Activated naive CD4-positive, alpha-beta T cell treated with anti-CD3 and anti-CD28 coated beads for 36 hours (primary cell): ENCODE measurements at regions of chr9 and their contacts with region 1.

Region 1: DNA sequence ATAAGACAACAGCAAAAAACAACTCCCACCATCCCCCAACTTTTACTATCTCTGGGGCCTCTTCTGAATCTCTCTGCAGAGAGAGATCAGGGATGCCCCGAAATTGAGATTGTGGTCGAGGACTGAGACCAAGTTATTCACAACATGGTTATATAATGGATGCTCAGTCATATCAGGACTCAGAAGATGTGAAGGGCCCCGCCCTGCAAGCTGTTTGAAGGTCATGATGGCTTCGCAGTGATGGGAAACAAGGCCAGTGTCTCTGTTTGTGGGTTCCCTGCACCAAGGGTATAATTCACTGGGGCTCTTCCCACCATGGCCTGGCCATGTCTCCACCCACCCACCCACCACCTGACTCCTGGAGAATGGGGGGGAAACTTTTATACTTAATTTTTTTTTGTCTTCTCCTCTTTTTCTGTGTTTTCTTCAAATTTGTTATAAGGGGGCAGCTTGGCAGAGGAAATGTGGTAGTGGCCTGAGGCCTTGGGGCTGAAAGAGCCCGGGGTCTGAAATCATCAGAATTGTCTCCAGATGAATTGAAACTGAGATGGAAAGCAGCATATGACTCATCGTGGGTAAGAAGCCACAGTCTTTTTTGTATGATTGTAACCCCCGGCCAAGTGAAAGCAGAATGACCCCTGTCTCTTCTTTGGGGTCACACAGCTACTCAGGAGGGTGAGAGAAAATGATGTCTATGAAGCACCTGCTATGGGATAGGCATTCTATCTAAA is 15.0 kb upstream of the TEX48 start:
- DNase-seq: peak; percentile 89
- H3K4me3 Mint-ChIP-seq: peak overlapping the region; percentile 54
- H3K27ac Mint-ChIP-seq: peak overlapping the region; percentile 98
- H3K4me1 Mint-ChIP-seq: peaks cover 74% of the 10 kb centered on the region
- H3K27me3 Mint-ChIP-seq: no peaks in the 10 kb centered on the region

Region 2: GRCh38 chr9:114304416-114305188 is 392.4 kb before region 1 on chr9:
- CTCF ChIA-PET with region 1: no interaction called
- intact Hi-C with region 1: no loop called
- DNase-seq: no peak
- H3K4me3 Mint-ChIP-seq: no peak overlapping the region
- H3K27ac Mint-ChIP-seq: no peak overlapping the region
- H3K4me1 Mint-ChIP-seq: peaks cover 4% of the 10 kb centered on the region
- H3K27me3 Mint-ChIP-seq: no peaks in the 10 kb centered on the region

Region 3: DNA sequence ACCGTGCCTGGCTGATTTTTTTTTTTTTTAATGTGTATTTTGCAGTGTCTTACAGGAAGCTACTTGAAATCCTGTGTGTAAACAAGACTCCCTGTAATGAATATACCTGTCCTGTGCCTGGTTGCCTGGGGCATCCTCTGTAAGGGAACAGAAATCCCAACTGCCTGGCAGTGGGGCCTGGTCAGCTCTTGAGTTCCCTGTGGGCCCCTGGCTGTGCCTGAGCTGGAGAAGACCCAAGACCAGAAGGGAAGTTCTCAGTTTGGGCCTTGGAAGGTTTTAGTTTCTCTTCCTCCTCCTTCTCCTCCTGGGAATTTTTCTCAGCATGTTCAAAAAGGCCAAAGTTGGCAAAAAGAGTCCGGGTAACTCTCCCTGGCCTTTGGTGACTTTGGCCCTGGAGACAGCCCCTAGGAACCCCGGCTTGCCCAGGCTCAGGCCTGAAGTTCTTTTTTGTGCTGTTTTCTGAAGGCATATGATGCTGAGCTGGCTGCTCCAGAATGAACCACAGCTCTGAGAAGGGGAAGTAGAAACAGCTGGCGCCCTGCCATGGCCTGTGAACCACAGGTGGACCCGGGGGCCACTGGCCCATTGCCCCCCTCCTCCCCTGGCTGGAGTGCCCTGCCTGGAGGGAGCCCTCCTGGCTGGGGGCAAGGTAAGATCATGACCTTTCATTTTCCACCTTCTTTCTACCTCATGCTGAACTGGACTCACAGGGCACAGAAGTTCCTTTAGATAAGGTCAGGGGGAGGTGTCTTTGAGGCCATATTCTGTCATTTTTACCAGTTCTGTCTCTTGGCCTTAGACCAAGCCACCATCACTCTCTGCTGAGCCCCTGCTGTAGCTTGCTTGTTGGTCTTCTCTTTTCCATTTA is 80.1 kb before region 1 on chr9:
- CTCF ChIA-PET with region 1: no interaction called
- intact Hi-C with region 1: no loop called
- DNase-seq: peak; percentile 23
- H3K4me3 Mint-ChIP-seq: no peak overlapping the region
- H3K27ac Mint-ChIP-seq: peak overlapping the region; percentile 89
- H3K4me1 Mint-ChIP-seq: peaks cover 59% of the 10 kb centered on the region
- H3K27me3 Mint-ChIP-seq: no peaks in the 10 kb centered on the region

Region 4: DNA sequence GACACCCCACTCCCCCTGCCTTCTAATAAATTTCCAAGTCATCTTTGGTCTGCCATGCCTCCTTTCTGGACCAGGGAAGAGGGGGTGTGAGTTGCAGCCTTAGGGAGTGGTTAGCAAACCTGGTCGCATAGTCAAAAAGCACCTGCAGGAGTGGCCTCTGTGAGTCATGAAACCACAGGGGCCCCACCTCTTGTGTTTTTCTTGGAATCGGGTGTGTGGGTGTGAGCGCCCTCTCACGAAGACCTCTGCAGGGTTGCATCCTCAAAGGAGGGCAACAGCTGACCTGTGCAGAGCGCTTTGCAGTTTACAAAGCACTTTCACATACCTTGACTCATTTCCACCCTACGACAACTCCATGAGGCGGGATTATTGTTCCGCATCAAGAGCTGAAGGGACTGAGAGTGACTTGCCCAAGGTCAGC is 21.8 kb after region 1 on chr9:
- CTCF ChIA-PET with region 1: interaction called, 8 read pairs
- intact Hi-C with region 1: loop called (anchors 1 kb)
- DNase-seq: peak; percentile 97
- H3K4me3 Mint-ChIP-seq: peak overlapping the region; percentile 22
- H3K27ac Mint-ChIP-seq: peak overlapping the region; percentile 81
- H3K4me1 Mint-ChIP-seq: peaks cover 49% of the 10 kb centered on the region
- H3K27me3 Mint-ChIP-seq: peaks cover 5% of the 10 kb centered on the region

Region 5: DNA sequence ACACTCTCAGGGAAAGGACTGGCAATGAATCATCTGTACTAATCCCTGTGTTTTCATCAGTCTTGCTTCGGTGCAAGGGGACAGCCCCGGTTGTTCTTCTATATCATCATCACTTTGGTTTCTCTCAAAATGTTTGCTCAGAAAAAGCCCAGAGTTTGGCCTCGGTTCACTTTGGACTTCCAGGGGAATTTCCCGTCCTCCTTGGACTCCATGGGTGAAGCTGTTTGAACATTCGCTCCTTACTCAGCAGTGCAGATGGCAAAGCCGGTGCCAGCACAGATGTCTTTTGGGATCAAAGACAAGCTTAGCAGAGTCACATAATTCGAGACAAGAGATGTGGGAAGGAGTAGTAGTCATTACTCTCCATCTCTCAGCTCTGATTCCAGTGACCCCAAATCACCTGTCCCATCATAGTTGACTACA is 303.2 kb after region 1 on chr9:
- CTCF ChIA-PET with region 1: interaction called, 3 read pairs
- intact Hi-C with region 1: loop called (anchors 1 kb)
- DNase-seq: peak; percentile 68
- H3K4me3 Mint-ChIP-seq: peak overlapping the region; percentile 66
- H3K27ac Mint-ChIP-seq: peak overlapping the region; percentile 83
- H3K4me1 Mint-ChIP-seq: peaks cover 51% of the 10 kb centered on the region
- H3K27me3 Mint-ChIP-seq: no peaks in the 10 kb centered on the region

Region 6: GRCh38 chr9:115204904-115205453 is 508.0 kb after region 1 on chr9:
- CTCF ChIA-PET with region 1: no interaction called
- intact Hi-C with region 1: loop called (anchors 2 kb)
- DNase-seq: no peak
- H3K4me3 Mint-ChIP-seq: no peak overlapping the region
- H3K27ac Mint-ChIP-seq: no peak overlapping the region
- H3K4me1 Mint-ChIP-seq: peaks cover 15% of the 10 kb centered on the region
- H3K27me3 Mint-ChIP-seq: peaks cover 33% of the 10 kb centered on the region